Gastrocnemius medialis (tissue), 4 donors: ENCODE measurements at regions of chr18 and their contacts with region 1.

Region 1: GRCh38 chr18:24488824-24489493 is 28.5 kb downstream of the HRH4 start:
- DNase-seq: no peak
- ATAC-seq: peak in 1 of 2 donors; percentile 36
- H3K4me3 ChIP-seq: no peak overlapping the region
- H3K27ac ChIP-seq: no peak overlapping the region
- H3K4me1 ChIP-seq: no peaks in the 10 kb centered on the region
- H3K27me3 ChIP-seq: no peaks in the 10 kb centered on the region
- CTCF ChIP-seq: peak; percentile 33 to 74 (median 59)
- POLR2A ChIP-seq: no peak

Region 2: DNA sequence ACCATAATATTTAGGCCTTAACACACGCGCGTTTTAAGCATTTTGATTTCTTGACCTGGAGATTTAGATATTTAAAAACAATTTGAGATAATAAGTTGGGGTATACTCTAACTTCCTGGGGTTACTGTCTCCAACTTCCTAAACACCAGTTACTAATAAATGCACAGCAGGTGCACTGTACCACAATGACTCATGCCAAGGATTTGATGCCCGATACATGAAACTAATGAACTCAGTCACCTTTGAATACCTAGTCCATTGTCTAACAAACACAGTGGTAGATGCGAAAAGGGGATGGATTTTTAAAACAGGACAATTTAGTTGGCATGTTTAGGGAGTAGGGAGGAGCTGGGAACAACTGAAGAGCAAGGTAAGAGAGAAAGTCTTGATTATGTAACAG is 328.9 kb before region 1 on chr18:
- in situ Hi-C with region 1: loop called in 2 of 4 experiments (anchors 25 kb)
- intact Hi-C with region 1: no loop called
- DNase-seq: no peak
- ATAC-seq: no peak
- H3K4me3 ChIP-seq: no peak overlapping the region
- H3K27ac ChIP-seq: no peak overlapping the region
- H3K4me1 ChIP-seq: peaks cover 0 to 5% of the 10 kb centered on the region in 2 donors
- H3K27me3 ChIP-seq: no peaks in the 10 kb centered on the region
- CTCF ChIP-seq: no peak
- POLR2A ChIP-seq: no peak

Region 3: GRCh38 chr18:24176727-24177416 is 312.1 kb before region 1 on chr18:
- in situ Hi-C with region 1: loop called in 3 of 4 experiments (anchors 10 to 25 kb)
- intact Hi-C with region 1: no loop called
- DNase-seq: peak; percentile 40 to 53
- ATAC-seq: peak; percentile 77 to 78
- H3K4me3 ChIP-seq: no peak overlapping the region
- H3K27ac ChIP-seq: peak overlapping the region in 2 of 4 donors; percentile 1 to 22
- H3K4me1 ChIP-seq: peaks cover 6 to 7% of the 10 kb centered on the region in 2 donors
- H3K27me3 ChIP-seq: no peaks in the 10 kb centered on the region
- CTCF ChIP-seq: peak; percentile 71 to 85 (median 78)
- POLR2A ChIP-seq: no peak

Region 4: GRCh38 chr18:24362758-24363157 is 126.2 kb before region 1 on chr18:
- in situ Hi-C with region 1: loop called (anchors 5 to 10 kb)
- intact Hi-C with region 1: loop called (anchors 1 kb)
- DNase-seq: no peak
- ATAC-seq: no peak
- H3K4me3 ChIP-seq: no peak overlapping the region
- H3K27ac ChIP-seq: no peak overlapping the region
- H3K4me1 ChIP-seq: no peaks in the 10 kb centered on the region
- H3K27me3 ChIP-seq: no peaks in the 10 kb centered on the region
- CTCF ChIP-seq: no peak
- POLR2A ChIP-seq: no peak

Region 5: GRCh38 chr18:24368749-24369148 is 120.2 kb before region 1 on chr18:
- in situ Hi-C with region 1: loop called in 3 of 4 experiments (anchors 5 to 10 kb)
- intact Hi-C with region 1: no loop called
- DNase-seq: no peak
- ATAC-seq: no peak
- H3K4me3 ChIP-seq: no peak overlapping the region
- H3K27ac ChIP-seq: no peak overlapping the region
- H3K4me1 ChIP-seq: no peaks in the 10 kb centered on the region
- H3K27me3 ChIP-seq: no peaks in the 10 kb centered on the region
- CTCF ChIP-seq: no peak
- POLR2A ChIP-seq: no peak

Region 6: GRCh38 chr18:24413148-24413547 is 75.8 kb before region 1 on chr18:
- in situ Hi-C with region 1: no loop called
- intact Hi-C with region 1: no loop called
- DNase-seq: no peak
- ATAC-seq: no peak
- H3K4me3 ChIP-seq: no peak overlapping the region
- H3K27ac ChIP-seq: no peak overlapping the region
- H3K4me1 ChIP-seq: no peaks in the 10 kb centered on the region
- H3K27me3 ChIP-seq: peaks cover 0 to 5% (median 3%) of the 10 kb centered on the region in 3 donors
- CTCF ChIP-seq: no peak
- POLR2A ChIP-seq: no peak

Region 7: GRCh38 chr18:24726727-24727492 is 238.0 kb after region 1 on chr18:
- in situ Hi-C with region 1: no loop called
- intact Hi-C with region 1: loop called (anchors 2 kb)
- DNase-seq: peak; percentile 30 to 33
- ATAC-seq: peak; percentile 62 to 75
- H3K4me3 ChIP-seq: peak overlapping the region; percentile 36 to 47 (median 41)
- H3K27ac ChIP-seq: no peak overlapping the region
- H3K4me1 ChIP-seq: peaks cover 0 to 5% of the 10 kb centered on the region in 2 donors
- H3K27me3 ChIP-seq: peaks cover 0 to 5% (median 0%) of the 10 kb centered on the region in 3 donors
- CTCF ChIP-seq: peak; percentile 44 to 81 (median 67)
- POLR2A ChIP-seq: no peak